ENCODE measurements at regions of chr2 and their contacts with region 1.

Region 1: GRCh38 chr2:201363857-201364560 is 6.9 kb upstream of the FLACC1 start:
- DNase-seq: peak; percentile 27
- ATAC-seq: peak; percentile 91
- H3K4me3 Mint-ChIP-seq: no peak overlapping the region
- H3K27ac Mint-ChIP-seq: peak overlapping the region; percentile 44
- H3K4me1 Mint-ChIP-seq: peaks cover 34% of the 10 kb centered on the region
- H3K27me3 Mint-ChIP-seq: no peaks in the 10 kb centered on the region

Region 2: GRCh38 chr2:200756618-200757321 is 607.2 kb before region 1 on chr2:
- CTCF ChIA-PET with region 1: no interaction called
- POLR2A ChIA-PET with region 1: no interaction called
- intact Hi-C with region 1: no loop called
- DNase-seq: no peak
- ATAC-seq: no peak
- H3K4me3 Mint-ChIP-seq: no peak overlapping the region
- H3K27ac Mint-ChIP-seq: no peak overlapping the region
- H3K4me1 Mint-ChIP-seq: peaks cover 3% of the 10 kb centered on the region
- H3K27me3 Mint-ChIP-seq: peaks cover 15% of the 10 kb centered on the region

Region 3: DNA sequence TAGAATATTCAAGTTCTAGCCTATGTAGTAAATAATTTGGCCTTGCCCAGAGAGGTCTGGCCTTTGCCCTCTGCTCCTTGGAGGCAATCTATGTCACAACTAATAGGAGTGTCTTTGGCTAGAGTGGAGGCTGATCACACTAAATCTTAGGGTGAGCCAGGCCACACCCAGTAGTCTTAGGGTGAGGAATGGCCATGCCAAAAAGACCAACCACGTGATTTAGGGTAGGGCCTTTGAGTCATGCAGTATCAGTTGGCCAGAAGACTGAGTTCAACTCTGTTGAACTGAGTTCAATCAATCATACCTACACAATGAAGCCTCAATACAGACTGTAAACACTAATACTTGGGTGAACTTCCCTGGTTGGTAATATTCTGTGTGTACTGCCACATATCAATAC is 19.1 kb after region 1 on chr2:
- CTCF ChIA-PET with region 1: interaction called, 11 read pairs
- POLR2A ChIA-PET with region 1: no interaction called
- intact Hi-C with region 1: no loop called
- DNase-seq: no peak
- ATAC-seq: no peak
- H3K4me3 Mint-ChIP-seq: no peak overlapping the region
- H3K27ac Mint-ChIP-seq: no peak overlapping the region
- H3K4me1 Mint-ChIP-seq: no peaks in the 10 kb centered on the region
- H3K27me3 Mint-ChIP-seq: no peaks in the 10 kb centered on the region

Measured in activated CD4-positive, alpha-beta T cell treated with anti-CD3 and anti-CD28 coated beads for 36 hours (primary cell).